Heart right ventricle (tissue), 16 donors: ENCODE measurements at regions of chr12 and their contacts with region 1.

Region 1: GRCh38 chr12:21248679-21249078 is 86.0 kb downstream of the SLCO1A2 start:
- DNase-seq: no peak
- ATAC-seq: no peak
- H3K4me3 ChIP-seq: no peak overlapping the region
- H3K27ac ChIP-seq: no peak overlapping the region
- H3K4me1 ChIP-seq: peaks cover 0 to 8% (median 0%) of the 10 kb centered on the region in 9 donors
- H3K27me3 ChIP-seq: no peaks in the 10 kb centered on the region
- CTCF ChIP-seq: peak in 4 of 9 donors; percentile 13 to 25 (median 22)

Region 2: GRCh38 chr12:21234395-21234794 is 14.3 kb before region 1 on chr12:
- intact Hi-C with region 1: loop called in 1 of 10 experiments (anchors 2 kb)
- DNase-seq: no peak
- ATAC-seq: no peak
- H3K4me3 ChIP-seq: no peak overlapping the region
- H3K27ac ChIP-seq: no peak overlapping the region
- H3K4me1 ChIP-seq: no peaks in the 10 kb centered on the region
- H3K27me3 ChIP-seq: no peaks in the 10 kb centered on the region
- CTCF ChIP-seq: no peak

Region 3: DNA sequence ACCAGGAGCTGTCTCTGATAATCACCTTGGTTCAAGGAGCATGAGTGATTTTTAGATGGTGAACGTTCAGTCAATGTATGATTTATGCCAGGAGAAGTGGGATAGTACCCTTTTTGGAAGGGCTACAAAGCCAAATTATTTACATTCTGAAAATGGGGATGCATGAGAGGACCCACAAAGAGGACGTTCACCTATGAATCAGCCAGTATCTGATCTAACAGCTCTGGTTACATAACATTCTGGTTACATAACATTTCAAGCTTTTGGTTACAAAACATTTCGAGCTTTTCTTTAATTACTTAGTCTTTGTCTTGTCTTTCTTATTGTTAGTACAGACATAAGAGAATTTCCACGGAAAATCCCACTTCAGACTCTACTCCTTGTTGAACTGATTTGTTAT is 17.3 kb after region 1 on chr12:
- intact Hi-C with region 1: no loop called
- DNase-seq: no peak
- ATAC-seq: no peak
- H3K4me3 ChIP-seq: no peak overlapping the region
- H3K27ac ChIP-seq: no peak overlapping the region
- H3K4me1 ChIP-seq: no peaks in the 10 kb centered on the region
- H3K27me3 ChIP-seq: no peaks in the 10 kb centered on the region
- CTCF ChIP-seq: no peak